Cardiac septum (tissue), 1 donor: ENCODE measurements at regions of chr10 and their contacts with region 1.

Region 1: DNA sequence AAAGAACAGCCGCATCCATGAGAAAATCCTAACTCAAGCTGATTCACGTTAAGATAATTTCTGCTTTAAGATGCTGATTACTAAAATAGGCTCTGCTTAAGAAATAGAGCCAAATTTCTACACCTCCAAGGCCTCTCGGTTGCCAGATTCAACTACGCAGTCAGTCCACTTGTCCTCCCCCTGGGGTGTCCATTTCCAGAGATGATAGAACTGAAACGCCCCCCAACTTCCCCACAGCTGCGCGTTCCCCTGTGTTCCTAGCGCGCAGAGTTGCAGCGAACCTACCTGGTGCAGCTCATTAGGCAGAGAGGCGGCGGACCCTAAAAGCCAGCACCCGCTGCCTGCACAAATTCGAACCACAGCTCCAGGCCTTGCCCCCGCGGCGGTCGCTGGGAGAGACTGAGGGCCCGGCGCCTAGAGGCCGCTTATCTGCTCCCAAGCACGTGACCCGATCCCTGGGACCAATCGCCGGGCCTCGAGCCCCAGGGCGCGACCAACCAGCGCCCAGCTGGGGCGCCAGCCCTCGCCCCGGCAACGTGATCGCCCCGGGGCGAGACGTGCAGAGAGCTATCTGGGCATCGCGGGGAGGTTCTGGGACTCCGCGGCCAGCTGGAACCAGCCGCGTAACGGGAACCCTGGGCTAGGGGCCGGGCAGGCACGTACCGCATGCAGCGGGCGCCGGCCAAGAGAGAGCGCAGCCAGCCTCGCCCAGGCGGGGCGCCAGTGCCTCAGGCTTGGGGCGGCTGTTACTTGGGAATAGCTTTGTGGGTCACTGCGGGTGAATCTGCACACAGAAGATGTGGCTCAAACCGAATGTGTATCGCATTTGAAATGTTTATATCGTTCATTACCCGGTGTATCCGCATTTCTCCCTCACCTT is at the start of gene PPP1R3C:
- DNase-seq: peak; percentile 94
- total RNA-seq, gene PPP1R3C: 212 TPM

Region 2: DNA sequence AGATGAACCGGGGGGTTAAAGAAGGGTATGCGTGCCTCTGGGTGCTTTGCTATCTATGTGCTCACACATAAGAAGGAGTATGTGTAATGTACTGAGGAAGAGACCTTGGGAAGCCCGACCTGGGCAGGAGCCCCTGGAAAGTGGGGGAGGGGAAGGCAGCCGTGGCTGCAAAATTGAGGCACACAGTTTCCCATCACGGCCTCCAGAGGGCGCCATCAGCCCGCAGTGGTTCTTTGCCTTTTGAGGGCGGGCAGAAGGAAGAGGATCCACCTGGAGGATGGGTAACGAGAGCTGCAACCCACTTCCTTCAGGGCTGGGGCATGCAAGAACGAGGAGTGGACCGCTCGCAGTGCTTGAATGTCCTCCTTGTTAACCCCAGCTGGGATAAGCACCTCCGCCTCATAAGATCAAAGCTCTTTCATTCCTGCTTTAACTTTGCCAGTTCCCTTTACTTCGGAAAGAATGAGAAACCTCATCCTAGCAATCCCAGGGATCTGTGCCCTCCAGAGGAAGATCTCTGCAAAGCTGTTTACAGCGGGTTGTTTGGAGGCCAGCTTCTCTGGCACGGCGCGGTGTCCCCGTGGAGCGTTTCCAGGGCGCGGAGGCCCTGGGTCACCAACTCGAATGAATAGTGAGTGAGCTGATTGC is 334.6 kb before region 1 on chr10:
- intact Hi-C with region 1: loop called (anchors 5 kb)
- DNase-seq: peak; percentile 85

Region 3: GRCh38 chr10:91493313-91493712 is 139.6 kb before region 1 on chr10:
- intact Hi-C with region 1: loop called (anchors 2 kb)
- DNase-seq: no peak

Region 4: DNA sequence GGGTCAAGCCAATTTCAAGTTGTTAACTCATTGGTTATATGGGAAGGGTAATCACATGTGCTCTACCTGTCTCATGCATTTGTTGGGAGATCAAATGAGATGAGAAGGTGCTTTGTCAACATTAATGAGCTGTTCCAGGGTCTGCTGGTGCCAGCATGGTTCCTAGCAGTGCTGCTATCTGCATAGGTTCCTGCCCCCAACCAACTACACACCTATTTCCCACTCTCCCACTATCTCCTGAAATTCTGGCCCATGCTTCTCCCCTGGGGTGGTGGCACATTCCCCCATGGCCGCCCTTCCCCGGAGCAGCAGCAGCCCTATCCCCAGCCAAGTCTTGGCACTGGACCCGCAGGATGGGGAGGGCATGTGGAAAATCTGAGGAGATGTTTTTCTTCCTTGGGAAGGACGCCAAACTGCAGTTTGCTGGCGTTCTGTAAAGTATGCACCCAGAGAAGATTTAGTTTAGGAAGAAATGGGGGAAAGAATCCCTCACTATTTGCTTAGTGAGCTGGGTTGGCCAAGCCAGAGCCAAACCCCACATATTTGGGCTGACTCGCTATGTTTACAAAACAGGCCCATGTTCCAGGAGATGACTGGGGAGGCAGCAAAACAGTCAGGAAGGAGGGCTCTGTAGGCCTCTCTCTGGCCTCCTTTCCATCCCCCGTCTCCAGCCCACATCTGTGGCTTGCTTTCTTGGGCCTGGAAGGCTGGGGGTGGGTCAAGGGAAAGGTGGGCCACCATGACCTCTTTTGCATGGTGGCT is 42.6 kb before region 1 on chr10:
- intact Hi-C with region 1: loop called (anchors 1 kb)
- DNase-seq: no peak

Region 5: DNA sequence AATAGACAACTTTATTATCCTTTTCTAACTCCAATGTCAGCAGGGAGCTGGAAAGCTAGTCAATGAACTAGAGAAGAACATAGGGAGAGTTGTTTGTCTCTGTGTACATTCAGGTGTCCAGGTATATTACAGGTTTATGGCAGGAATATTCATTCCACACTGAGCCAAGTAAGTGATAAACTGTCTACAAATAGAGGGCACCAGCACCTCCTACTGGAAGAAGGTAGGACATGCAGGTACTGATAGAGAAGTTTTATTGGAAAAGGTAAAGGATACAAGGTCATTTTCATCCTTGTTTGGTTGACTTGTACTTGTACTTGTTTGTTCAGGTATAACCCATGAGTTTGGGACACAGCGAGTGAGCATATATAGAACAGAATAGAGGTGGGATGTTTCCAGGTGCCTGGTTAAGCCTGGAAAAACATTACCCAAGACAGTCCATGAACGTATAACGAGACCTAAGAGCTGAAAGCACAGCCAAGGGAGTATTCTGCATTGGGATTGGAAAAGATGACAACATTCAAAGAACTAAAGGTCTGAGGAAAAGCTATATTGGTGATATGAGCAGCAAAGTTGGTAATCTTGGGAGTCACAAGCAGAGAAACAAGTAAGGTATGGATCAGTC is 61.4 kb after region 1 on chr10:
- intact Hi-C with region 1: loop called (anchors 5 kb)
- DNase-seq: no peak

Region 6: GRCh38 chr10:91724933-91725332 is 92.0 kb after region 1 on chr10:
- intact Hi-C with region 1: no loop called
- DNase-seq: no peak